ENCODE measurements at regions of chr7 and their contacts with region 1.

Region 1: GRCh38 chr7:84176716-84177115 is 17.9 kb downstream of the SEMA3A start:
- DNase-seq: no peak

Region 2: DNA sequence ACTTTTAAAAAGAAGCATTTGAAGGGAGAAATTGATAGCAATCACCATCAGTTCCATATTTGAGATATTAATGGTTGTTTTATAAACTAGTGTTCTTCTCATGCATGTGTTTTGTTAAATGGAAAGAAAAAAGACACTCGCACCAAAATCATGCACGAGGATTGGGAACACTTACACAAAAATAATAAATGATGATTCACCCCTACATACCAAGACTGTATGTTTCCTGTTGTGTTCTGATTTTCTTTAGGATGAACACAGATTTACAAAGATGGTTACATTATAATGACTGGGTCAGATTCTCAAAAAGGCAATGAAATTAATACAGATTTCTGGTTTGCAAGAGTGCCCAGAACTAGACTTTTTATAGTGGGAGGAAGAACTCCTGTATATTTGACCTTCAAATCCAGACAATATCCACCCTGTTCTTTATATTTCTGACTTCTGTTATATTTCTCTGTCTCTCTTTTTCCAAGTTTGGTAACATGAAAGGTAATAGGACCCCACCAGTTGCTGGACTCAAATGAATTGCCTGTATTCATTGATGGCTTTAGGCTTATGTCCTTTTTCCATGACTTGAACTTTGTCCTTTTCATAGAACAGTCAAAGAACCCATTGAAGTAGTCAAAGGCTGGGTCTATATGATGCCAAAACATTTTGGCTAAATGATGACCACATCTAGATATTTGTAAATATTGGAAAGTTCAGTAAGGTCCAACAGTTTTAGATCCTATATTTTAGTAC is 36.6 kb before region 1 on chr7:
- intact Hi-C with region 1: no loop called
- DNase-seq: no peak

Region 3: DNA sequence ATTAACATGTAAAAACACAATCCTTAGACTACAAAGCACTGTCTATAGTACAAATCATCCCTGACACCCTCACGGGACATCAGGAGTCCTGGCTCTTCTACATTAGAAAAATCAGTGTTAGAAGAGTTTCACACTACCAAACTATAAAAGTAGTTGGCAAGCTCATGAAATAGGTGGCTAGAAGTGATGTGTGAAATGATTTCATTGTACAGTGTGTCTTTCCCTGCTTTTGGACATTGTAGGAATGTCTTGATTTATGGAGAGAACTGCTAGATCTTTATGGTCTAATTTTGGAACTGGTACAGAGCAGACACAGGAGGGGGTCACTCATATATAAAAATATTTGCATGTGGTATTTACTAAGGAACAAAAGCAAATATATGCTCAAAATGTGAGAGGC is 15.3 kb before region 1 on chr7:
- intact Hi-C with region 1: loop called in 1 of 2 experiments (anchors 1 kb)
- DNase-seq: no peak

Region 4: DNA sequence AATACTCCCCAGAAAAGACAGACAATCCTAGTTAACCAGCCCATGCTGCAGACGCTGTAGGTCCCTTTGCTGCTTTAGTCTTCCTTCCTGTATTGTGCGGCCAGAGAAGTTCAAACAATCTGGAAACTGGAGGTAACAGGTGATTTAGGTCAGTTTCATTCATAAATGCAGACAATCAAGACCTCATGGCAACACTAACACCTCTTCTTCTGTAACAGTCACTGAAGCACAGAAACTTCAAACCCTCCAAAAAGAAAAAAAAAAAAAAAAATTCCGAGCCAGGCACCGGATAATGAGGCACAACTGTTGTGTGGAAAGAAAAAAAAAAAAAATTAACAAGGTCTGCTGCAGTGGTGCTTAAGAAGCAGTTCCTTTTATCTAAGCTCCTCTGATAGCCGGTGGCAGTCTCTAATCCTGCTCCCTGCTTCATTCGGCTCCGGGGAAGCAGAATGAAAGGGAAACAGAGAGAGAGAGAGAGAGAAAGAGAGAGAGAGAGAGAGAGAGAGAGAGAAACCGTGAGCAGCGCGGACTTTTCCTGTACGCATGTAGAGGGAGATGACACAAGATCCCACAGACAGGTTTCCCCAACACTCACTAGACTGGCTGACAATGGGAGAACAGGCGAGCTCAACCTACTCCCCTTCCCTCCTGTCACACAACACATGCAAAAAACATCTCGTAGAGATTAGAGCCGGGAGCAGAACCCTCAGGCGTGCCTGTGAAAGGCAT is 18.0 kb after region 1 on chr7 and contains the start of gene SEMA3A:
- intact Hi-C with region 1: no loop called
- DNase-seq: no peak
- total RNA-seq, gene SEMA3A: 10.9 to 19.4 TPM

Region 5: DNA sequence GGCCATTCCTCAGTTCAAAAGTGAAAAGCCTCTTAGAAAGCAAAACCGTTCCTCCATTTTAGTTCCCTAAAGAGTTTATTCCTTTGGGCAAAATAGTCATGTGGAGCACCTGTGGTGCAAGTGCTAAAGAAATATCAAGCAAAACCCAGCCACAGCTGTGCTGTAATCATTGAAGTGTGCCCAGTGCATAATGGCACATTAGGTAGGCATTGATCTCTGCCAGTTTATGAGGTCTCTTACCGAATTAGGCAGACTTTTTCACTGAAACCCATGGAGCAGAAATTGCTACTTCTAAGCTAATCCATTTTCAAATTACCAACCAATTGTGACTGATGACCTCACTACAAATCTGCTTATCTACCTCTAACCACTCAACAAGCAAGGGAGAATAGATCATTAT is 115.0 kb after region 1 on chr7:
- intact Hi-C with region 1: no loop called
- DNase-seq: no peak

Region 6: GRCh38 chr7:85447004-85447403 is 1270.3 kb after region 1 on chr7:
- intact Hi-C with region 1: no loop called
- DNase-seq: no peak

Measured in posterior vena cava (tissue), 2 donors.